ENCODE measurements at regions of chr2 and their contacts with region 1.

Region 1: DNA sequence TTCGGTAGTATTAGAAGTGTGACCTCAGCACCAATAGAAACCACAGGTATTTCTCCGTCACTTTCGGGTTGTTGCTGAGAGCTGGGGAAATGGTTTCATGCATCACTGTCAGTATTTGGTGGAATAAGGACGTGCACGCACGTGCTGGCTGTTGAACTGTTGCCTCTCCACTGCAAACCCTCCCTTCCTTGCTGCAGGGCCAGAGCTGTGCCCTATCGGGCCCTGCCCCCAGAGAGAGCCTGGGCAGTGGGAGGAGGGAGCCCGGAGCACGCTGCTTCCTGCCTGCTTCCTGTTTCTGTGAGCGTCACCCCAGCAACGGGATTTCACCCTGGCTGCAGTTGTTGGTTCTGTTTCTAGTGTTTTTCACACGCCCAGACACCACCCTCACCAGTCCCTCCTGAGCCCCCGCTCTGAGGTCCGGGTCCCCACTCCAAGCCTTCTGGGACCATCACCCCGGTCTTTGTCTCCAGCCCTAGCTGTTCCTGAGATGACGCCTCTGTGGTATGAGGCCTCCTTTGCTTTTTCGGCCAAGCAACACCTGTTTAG is 47.4 kb downstream of the LRRFIP1 start:
- DNase-seq: peak; percentile 97

Region 2: GRCh38 chr2:237512774-237513466 is 161.9 kb before region 1 on chr2:
- intact Hi-C with region 1: loop called (anchors 5 kb)
- DNase-seq: peak; percentile 92

Region 3: GRCh38 chr2:237603718-237604362 is 71.0 kb before region 1 on chr2:
- intact Hi-C with region 1: loop called (anchors 5 kb)
- DNase-seq: no peak

Region 4: GRCh38 chr2:237691908-237692600 is 17.2 kb after region 1 on chr2:
- intact Hi-C with region 1: loop called (anchors 2 kb)
- DNase-seq: peak; percentile 99

Region 5: DNA sequence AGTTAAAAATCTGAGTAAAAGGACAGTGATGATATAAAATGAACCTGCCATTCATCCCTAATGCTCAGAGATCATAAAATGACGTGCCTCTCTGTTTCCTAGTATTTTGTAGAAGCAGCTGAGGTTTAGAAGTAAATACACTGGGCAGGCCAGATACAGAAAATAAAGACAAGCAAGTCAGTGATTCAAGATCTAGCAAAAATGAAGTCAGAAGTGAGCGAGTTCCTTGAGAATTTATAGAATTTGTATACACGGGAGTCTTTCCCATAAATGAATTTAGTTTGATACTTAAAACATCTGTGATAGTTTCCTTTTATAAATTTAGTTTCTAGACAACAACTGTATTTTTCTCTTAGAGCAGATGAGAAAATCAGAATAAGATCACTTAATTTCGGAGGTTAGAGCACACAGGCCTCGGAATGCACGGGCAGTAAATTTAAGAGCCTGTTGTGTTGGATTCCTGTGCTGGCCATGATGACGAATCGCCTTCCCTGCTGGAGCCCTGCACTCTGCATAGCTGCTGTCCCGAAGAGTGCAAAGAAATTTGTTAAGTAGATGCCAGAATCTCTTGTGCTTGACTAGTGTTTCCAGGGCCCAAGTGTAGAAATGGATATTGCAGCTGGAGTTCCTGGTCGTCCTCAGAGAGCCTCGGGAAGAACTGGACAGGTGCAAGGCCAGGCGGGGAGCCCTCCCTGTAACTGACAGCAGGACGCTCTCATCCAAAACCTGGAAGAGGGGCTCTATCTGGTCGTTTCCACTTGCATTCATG is 40.1 kb after region 1 on chr2:
- intact Hi-C with region 1: no loop called
- DNase-seq: no peak

Region 6: GRCh38 chr2:237744613-237745249 is 69.9 kb after region 1 on chr2:
- intact Hi-C with region 1: loop called (anchors 1 kb)
- DNase-seq: peak; percentile 92

Region 7: GRCh38 chr2:237966565-237967462 is 292.0 kb after region 1 on chr2 and contains the start of gene UBE2F:
- intact Hi-C with region 1: no loop called
- DNase-seq: peak; percentile 99
- total RNA-seq, gene UBE2F: 61.0 TPM

Measured in cardiac septum (tissue), 1 donor.